ENCODE measurements at regions of chr7 and their contacts with region 1.

Region 1: DNA sequence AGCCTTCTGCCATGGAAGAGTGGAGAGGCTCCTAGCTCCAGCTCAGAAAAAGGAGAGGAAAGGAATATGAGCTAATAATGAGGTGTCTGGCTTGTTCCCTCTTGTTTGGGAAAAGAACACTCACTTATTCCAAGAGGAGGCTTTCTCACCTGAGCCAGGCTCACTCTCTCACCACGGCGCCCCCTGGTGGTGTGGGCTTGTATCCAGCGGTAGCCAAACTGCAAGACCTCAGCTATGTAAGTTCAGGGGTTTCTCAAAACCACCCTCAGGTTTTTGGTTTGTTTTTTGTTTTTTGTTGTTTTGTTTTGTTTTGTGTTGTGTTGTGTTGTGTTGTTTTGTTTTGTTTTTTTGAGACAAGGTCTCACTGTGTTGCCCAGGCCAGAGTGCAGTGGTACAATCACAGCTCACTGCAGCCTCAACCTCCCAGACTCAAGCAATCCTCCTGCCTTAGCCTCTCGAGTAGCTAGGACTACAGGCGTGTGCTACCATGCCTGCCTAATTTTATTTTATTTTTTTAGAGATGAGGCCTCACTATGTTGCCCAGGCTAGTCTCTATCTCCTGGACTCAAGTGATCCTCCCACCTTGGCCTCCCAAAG is 124.0 kb downstream of the TMEM130 start:
- DNase-seq: peak; percentile 87
- ATAC-seq: peak; percentile 47
- H3K4me3 Mint-ChIP-seq: no peak overlapping the region
- H3K27ac Mint-ChIP-seq: no peak overlapping the region
- H3K4me1 Mint-ChIP-seq: no peaks in the 10 kb centered on the region
- H3K27me3 Mint-ChIP-seq: peaks cover 9% of the 10 kb centered on the region

Region 2: DNA sequence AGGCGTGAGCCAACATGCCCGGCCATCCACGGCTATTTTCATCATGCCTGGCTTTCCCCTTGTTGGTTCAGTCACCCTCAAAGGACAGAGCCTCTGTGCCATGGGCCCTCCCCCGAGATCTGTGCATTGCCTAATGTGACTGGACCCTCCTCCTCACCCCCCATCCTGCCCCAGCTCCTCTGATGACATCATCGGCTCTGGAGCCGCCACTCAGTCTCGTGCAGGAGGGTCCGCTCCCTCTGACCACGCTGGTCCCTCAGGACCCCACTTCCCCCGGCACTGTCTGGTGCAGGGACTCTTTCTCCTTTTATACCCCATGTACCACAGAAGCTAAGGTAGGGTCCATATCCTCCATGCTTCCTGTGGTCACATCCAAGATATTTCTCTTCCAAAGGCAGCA is 311.7 kb before region 1 on chr7:
- CTCF ChIA-PET with region 1: interaction called, 16 read pairs
- POLR2A ChIA-PET with region 1: no interaction called
- intact Hi-C with region 1: loop called (anchors 1 kb)
- DNase-seq: no peak
- ATAC-seq: no peak
- H3K4me3 Mint-ChIP-seq: no peak overlapping the region
- H3K27ac Mint-ChIP-seq: no peak overlapping the region
- H3K4me1 Mint-ChIP-seq: peaks cover 4% of the 10 kb centered on the region
- H3K27me3 Mint-ChIP-seq: no peaks in the 10 kb centered on the region

Region 3: GRCh38 chr7:98733036-98733435 is 12.8 kb before region 1 on chr7:
- CTCF ChIA-PET with region 1: interaction called, 13 read pairs
- POLR2A ChIA-PET with region 1: no interaction called
- intact Hi-C with region 1: no loop called
- DNase-seq: peak; percentile 80
- ATAC-seq: peak; percentile 64
- H3K4me3 Mint-ChIP-seq: no peak overlapping the region
- H3K27ac Mint-ChIP-seq: no peak overlapping the region
- H3K4me1 Mint-ChIP-seq: no peaks in the 10 kb centered on the region
- H3K27me3 Mint-ChIP-seq: peaks cover 12% of the 10 kb centered on the region

Measured in activated CD4-positive, alpha-beta T cell treated with anti-CD3 and anti-CD28 coated beads for 36 hours (primary cell).